Panc1 (cell line): ENCODE measurements at regions of chr1 and their contacts with region 1.

Region 1: GRCh38 chr1:9058465-9058864 is 11.0 kb downstream of the SLC2A5 start:
- DNase-seq: no peak
- ATAC-seq: no peak
- H3K4me3 ChIP-seq: no peak overlapping the region
- H3K27ac ChIP-seq: no peak overlapping the region
- H3K4me1 ChIP-seq: no peaks in the 10 kb centered on the region
- H3K27me3 ChIP-seq: no peaks in the 10 kb centered on the region
- CTCF ChIP-seq: no peak

Region 2: DNA sequence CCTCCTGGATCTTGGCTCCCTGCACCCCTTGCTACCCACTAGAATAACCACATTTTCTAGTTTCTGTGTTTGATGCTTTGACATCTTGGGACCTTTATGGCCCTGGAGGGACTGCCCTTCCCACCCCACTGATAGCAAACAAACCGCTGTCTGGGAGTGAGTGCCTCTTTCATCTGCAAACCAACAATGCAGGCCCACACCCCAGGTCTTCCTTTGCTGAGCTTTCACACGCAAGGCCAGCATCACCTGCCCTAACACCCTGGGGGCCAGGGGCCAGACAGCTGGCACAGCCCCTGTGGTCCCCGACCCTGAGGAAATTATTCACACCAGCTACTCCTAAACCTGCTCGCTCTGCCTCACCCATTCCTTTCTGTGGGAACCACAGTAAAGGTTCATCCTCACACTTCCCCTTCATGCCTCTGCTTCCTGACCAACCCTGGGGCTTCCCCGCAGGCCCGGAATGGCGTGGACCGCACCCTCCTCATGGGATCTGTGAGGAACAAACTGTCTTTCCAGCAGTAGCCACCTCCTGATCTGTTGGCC is 47.6 kb before region 1 on chr1:
- CTCF ChIA-PET with region 1: no interaction called
- POLR2A ChIA-PET with region 1: no interaction called
- in situ Hi-C with region 1: no loop called
- intact Hi-C with region 1: no loop called
- DNase-seq: no peak
- ATAC-seq: no peak
- H3K4me3 ChIP-seq: no peak overlapping the region
- H3K27ac ChIP-seq: no peak overlapping the region
- H3K4me1 ChIP-seq: no peaks in the 10 kb centered on the region
- H3K27me3 ChIP-seq: no peaks in the 10 kb centered on the region
- CTCF ChIP-seq: no peak

Region 3: DNA sequence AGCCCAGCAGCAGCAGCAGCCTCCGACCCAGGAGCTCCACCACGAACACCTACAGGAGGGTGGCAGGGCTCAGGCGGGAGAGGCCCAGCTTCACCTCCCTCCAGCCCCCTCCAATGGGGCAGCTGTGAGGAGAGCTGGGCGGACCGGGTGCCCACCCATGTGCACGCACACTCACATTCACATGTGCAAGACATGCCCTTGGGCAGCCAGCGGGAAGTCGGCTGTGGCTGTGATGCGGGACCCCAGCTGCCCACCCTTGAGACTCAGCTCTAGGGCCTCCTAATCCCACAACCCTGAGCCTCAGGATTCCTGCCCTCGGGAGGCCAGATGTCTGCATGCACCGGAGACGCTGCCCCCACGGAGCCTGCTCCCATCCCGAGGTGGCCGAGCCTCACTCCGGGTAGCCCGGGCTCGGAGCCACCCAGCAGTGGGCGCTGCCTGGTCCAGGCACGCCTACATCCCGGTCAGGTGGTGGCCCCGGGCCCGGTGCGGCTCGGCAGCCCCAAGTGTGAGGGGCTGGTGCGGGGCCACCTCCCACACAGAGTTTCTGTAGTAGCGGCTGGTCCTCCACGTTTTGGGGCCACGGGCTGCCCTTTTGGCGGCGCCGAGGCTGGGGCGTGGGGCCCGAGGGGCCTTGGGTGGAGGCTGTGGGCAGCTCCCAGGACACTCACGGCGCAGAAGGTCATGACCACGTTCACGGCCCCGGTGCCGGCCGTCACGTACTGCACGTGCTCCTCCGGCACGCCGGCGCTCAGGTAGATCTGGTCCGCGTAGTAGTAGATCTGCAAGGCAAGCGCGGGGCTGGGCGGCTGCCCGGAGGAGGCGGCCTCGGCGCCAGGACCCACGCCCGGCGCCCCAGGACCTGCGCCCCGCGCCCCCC is 19.3 kb before region 1 on chr1:
- CTCF ChIA-PET with region 1: no interaction called
- POLR2A ChIA-PET with region 1: no interaction called
- in situ Hi-C with region 1: no loop called
- intact Hi-C with region 1: no loop called
- DNase-seq: no peak
- ATAC-seq: no peak
- H3K4me3 ChIP-seq: no peak overlapping the region
- H3K27ac ChIP-seq: no peak overlapping the region
- H3K4me1 ChIP-seq: no peaks in the 10 kb centered on the region
- H3K27me3 ChIP-seq: no peaks in the 10 kb centered on the region
- CTCF ChIP-seq: no peak

Region 4: GRCh38 chr1:9166289-9167235 is 108.1 kb after region 1 on chr1:
- CTCF ChIA-PET with region 1: no interaction called
- POLR2A ChIA-PET with region 1: interaction called, 13 read pairs
- in situ Hi-C with region 1: no loop called
- intact Hi-C with region 1: no loop called
- DNase-seq: no peak
- ATAC-seq: no peak
- H3K4me3 ChIP-seq: no peak overlapping the region
- H3K27ac ChIP-seq: 0 out of 2 replicates have a peak overlapping the region, but pooled peaks have one; percentile 36
- H3K4me1 ChIP-seq: peaks cover 37% of the 10 kb centered on the region
- H3K27me3 ChIP-seq: no peaks in the 10 kb centered on the region
- CTCF ChIP-seq: no peak

Region 5: GRCh38 chr1:9506901-9507300 is 448.4 kb after region 1 on chr1:
- CTCF ChIA-PET with region 1: interaction called, 12 read pairs
- POLR2A ChIA-PET with region 1: no interaction called
- in situ Hi-C with region 1: no loop called
- intact Hi-C with region 1: no loop called
- DNase-seq: no peak
- ATAC-seq: no peak
- H3K4me3 ChIP-seq: no peak overlapping the region
- H3K27ac ChIP-seq: no peak overlapping the region
- H3K4me1 ChIP-seq: no peaks in the 10 kb centered on the region
- H3K27me3 ChIP-seq: no peaks in the 10 kb centered on the region
- CTCF ChIP-seq: no peak